WTC11 (cell line): ENCODE measurements at regions of chr21 and their contacts with region 1.

Region 1: GRCh38 chr21:36319765-36320420 is at the start of gene MORC3:
- DNase-seq: peak; percentile 98
- ATAC-seq: peak; percentile 93
- H3K4me3 Mint-ChIP-seq: peak within 1 kb of the TSS; percentile 98
- H3K27ac Mint-ChIP-seq: peak within 1 kb of the TSS; percentile 100
- H3K4me1 Mint-ChIP-seq: peaks cover 20% of the 10 kb centered on the region
- H3K27me3 Mint-ChIP-seq: peaks cover 32% of the 10 kb centered on the region
- CTCF ChIP-seq: no peak
- total RNA-seq, gene MORC3: 15.9 to 17.2 TPM (median 16.1 TPM) in 3 replicates

Region 2: GRCh38 chr21:36306872-36307534 is 12.9 kb before region 1 on chr21:
- CTCF ChIA-PET with region 1: interaction called, 5 read pairs
- POLR2A ChIA-PET with region 1: interaction called, 10 read pairs
- DNase-seq: no peak
- ATAC-seq: peak; percentile 79
- H3K4me3 Mint-ChIP-seq: no peak overlapping the region
- H3K27ac Mint-ChIP-seq: peak overlapping the region; percentile 49; the same call in 1 of the 2 replicates
- H3K4me1 Mint-ChIP-seq: peaks cover 11% of the 10 kb centered on the region; the same call in 1 of the 2 replicates
- H3K27me3 Mint-ChIP-seq: peaks cover 96% of the 10 kb centered on the region
- CTCF ChIP-seq: no peak

Region 3: DNA sequence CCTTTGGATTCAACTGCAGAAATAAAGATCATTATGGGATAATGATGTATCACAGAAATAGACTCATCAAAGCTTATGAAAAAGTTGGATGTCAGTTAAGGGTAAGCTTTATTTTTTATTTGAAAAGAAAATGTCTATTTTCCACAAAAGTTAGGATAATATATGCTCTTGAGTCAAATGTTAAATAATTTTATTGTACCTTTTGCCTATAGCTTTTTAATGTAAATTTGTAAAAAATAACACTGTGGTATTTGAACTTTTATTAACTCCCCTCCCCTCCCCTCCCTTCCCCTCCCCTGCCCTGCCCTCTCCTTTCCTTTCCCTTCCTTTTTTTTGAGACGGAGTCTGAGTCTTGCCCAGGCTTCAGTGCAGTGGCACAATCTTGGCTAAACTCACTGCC is 25.0 kb after region 1 on chr21:
- CTCF ChIA-PET with region 1: no interaction called
- POLR2A ChIA-PET with region 1: no interaction called
- DNase-seq: no peak
- ATAC-seq: no peak
- H3K4me3 Mint-ChIP-seq: no peak overlapping the region
- H3K27ac Mint-ChIP-seq: no peak overlapping the region
- H3K4me1 Mint-ChIP-seq: no peaks in the 10 kb centered on the region
- H3K27me3 Mint-ChIP-seq: no peaks in the 10 kb centered on the region
- CTCF ChIP-seq: no peak

Region 4: DNA sequence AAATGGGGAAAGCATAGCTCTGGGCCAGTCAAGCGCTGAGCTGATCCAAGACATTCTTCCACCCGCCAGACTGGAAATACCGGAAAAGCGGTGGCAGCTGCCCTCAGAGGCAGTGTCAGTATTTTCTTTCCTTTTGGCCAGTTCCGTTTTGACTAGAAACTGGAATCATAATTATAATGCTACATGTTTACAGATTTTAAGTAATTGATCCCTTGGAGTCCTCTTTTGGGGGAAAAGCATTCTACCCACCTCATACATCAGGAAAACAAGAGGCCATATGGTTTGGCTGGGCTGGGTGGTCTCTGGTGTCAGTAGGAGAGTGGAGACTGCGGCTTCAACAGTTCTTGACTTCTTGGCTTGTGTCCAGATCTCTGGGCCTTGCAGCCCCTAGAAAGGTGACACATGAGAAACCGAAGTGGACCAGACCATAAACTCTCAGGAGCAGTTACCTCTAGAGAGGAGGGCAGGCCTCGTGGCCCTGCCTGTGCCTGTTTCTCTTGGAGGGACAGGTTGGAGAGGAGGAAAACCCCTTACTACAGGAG is 190.3 kb after region 1 on chr21:
- CTCF ChIA-PET with region 1: no interaction called
- POLR2A ChIA-PET with region 1: no interaction called
- DNase-seq: no peak
- ATAC-seq: no peak
- H3K4me3 Mint-ChIP-seq: no peak overlapping the region
- H3K27ac Mint-ChIP-seq: no peak overlapping the region
- H3K4me1 Mint-ChIP-seq: peaks cover 6% of the 10 kb centered on the region; the same call in 1 of the 2 replicates
- H3K27me3 Mint-ChIP-seq: no peaks in the 10 kb centered on the region
- CTCF ChIP-seq: no peak